OCI-LY7 (cell line): ENCODE measurements at regions of chr9 and their contacts with region 1.

Region 1: DNA sequence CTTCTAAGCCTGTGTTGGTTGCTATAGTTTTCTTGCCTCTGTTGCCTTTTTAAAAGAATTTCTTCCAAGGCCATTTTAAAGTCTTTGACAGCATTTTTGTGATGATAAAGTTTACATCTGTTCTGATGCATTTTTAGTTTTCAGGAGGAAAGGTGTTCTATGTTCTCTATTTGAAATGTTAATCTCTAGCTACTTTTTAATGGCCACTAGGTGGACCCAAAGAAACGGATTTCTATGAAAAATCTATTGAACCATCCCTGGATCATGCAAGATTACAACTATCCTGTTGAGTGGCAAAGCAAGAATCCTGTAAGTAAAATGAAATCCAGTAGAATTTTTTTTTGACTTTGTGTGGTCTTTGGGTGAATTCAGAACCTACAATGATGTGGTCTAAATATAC is 60.2 kb downstream of the MELK start:
- DNase-seq: peak; percentile 50
- H3K4me3 ChIP-seq: no peak overlapping the region
- H3K27ac ChIP-seq: no peak overlapping the region
- H3K4me1 ChIP-seq: no peaks in the 10 kb centered on the region
- CTCF ChIP-seq: peak; percentile 96

Region 2: DNA sequence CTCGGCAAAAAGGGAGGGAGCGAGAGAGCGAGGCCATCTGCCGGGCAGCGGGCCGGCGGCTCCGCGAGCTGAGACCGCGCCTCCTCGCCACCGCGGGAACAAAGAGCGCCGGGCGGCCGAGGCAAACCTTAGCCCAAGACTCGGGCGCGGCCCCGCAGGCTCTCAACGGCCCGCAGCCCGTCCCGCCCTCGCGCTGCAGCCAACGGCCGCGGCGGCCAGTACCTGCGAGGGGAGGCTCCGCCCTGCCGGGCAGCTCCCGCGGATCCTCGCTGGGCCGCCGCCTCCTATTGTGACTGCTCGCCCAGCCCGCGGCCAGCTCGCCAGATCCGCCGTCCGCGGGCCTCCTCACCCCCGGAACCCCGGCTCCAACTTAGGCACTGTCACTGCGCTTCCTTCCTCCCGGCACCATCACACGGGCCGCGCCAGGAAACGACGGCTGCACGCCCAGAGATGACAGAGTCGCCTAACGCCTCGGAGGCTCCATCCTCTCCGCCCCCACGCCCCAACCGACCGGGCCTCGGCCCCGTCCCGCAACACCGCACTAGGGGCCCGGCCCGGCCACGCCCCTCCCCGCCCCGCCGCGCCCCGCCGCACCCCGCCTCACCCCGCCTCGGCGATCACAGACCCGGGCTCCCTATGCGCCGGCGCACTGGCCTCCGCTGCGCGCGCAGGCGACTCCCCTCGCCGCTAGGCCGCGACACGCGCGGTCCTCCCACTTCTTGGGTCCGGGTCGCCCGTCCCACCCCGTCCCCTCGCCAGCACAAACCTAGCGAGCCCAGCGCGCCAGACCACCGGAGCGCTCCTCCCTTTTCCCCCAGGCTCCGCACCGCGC is 232.3 kb before region 1 on chr9:
- CTCF ChIA-PET with region 1: no interaction called
- POLR2A ChIA-PET with region 1: no interaction called
- intact Hi-C with region 1: loop called (anchors 10 kb)
- DNase-seq: peak; percentile 91
- H3K4me3 ChIP-seq: peak overlapping the region; percentile 86
- H3K27ac ChIP-seq: peak overlapping the region; percentile 93
- H3K4me1 ChIP-seq: peaks cover 17% of the 10 kb centered on the region
- CTCF ChIP-seq: no peak

Region 3: GRCh38 chr9:36728651-36729520 is 96.0 kb after region 1 on chr9:
- CTCF ChIA-PET with region 1: interaction called, 11 read pairs
- POLR2A ChIA-PET with region 1: interaction called, 3 read pairs
- intact Hi-C with region 1: loop called (anchors 1 kb)
- DNase-seq: peak; percentile 81
- H3K4me3 ChIP-seq: no peak overlapping the region
- H3K27ac ChIP-seq: no peak overlapping the region
- H3K4me1 ChIP-seq: peaks cover 16% of the 10 kb centered on the region
- CTCF ChIP-seq: peak; percentile 99

Region 4: GRCh38 chr9:36855448-36856315 is 222.8 kb after region 1 on chr9:
- CTCF ChIA-PET with region 1: no interaction called
- POLR2A ChIA-PET with region 1: no interaction called
- intact Hi-C with region 1: loop called (anchors 10 kb)
- DNase-seq: peak; percentile 71
- H3K4me3 ChIP-seq: no peak overlapping the region
- H3K27ac ChIP-seq: no peak overlapping the region
- H3K4me1 ChIP-seq: peaks cover 16% of the 10 kb centered on the region
- CTCF ChIP-seq: peak; percentile 76